Adrenal gland (tissue), 19 donors: ENCODE measurements at regions of chr6 and their contacts with region 1.

Region 1: GRCh38 chr6:79777713-79778579 is 146.8 kb downstream of the SH3BGRL2 start:
- DNase-seq: peak; percentile 65 to 82 (median 79)
- H3K4me3 ChIP-seq: peak overlapping the region in 1 of 4 donors; percentile 36
- H3K27ac ChIP-seq: no peak overlapping the region
- H3K4me1 ChIP-seq: no peaks in the 10 kb centered on the region
- H3K27me3 ChIP-seq: no peaks in the 10 kb centered on the region
- CTCF ChIP-seq: peak; percentile 85 to 98 (median 90)
- POLR2A ChIP-seq: no peak

Region 2: GRCh38 chr6:79525272-79526100 is 252.5 kb before region 1 on chr6:
- intact Hi-C with region 1: no loop called
- DNase-seq: peak in 3 of 7 donors; percentile 17 to 76 (median 25)
- H3K4me3 ChIP-seq: no peak overlapping the region
- H3K27ac ChIP-seq: peak overlapping the region in 1 of 5 donors; percentile 7
- H3K4me1 ChIP-seq: no peaks in the 10 kb centered on the region
- H3K27me3 ChIP-seq: no peaks in the 10 kb centered on the region
- CTCF ChIP-seq: no peak
- POLR2A ChIP-seq: no peak

Region 3: DNA sequence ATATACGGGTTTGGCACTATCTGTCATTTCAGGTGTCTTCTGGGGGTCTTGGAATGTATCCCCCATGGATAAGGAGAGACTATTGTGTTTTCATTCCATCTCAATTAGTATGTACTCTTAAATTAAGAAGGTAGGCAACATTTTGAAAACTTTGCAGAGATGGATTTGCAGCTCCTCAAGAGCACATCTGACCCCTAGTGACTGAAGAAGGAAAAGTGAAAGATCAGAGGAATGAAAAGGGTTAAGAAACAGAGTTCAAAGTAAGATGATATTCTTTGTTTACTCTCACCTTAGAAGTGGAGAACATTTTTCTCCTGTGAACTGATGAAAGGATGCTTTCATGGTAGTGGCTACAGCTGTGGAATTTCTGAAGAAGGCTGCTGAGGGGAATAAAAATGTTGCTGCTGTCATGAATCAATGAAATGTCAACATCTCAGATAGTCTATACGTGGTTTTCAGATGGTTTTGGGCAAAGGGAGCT is 105.3 kb before region 1 on chr6:
- intact Hi-C with region 1: no loop called
- DNase-seq: no peak
- H3K4me3 ChIP-seq: no peak overlapping the region
- H3K27ac ChIP-seq: no peak overlapping the region
- H3K4me1 ChIP-seq: no peaks in the 10 kb centered on the region
- H3K27me3 ChIP-seq: no peaks in the 10 kb centered on the region
- CTCF ChIP-seq: peak in 4 of 6 experiments; percentile 25 to 40 (median 30)
- POLR2A ChIP-seq: no peak

Region 4: GRCh38 chr6:79813854-79814709 is 36.1 kb after region 1 on chr6:
- intact Hi-C with region 1: loop called in 1 of 2 experiments (anchors 5 kb)
- DNase-seq: peak; percentile 66 to 91 (median 75)
- H3K4me3 ChIP-seq: no peak overlapping the region
- H3K27ac ChIP-seq: no peak overlapping the region
- H3K4me1 ChIP-seq: no peaks in the 10 kb centered on the region
- H3K27me3 ChIP-seq: no peaks in the 10 kb centered on the region
- CTCF ChIP-seq: peak; percentile 69 to 89 (median 78)
- POLR2A ChIP-seq: no peak

Region 5: GRCh38 chr6:79869600-79870084 is 91.7 kb after region 1 on chr6:
- intact Hi-C with region 1: loop called in 1 of 2 experiments (anchors 5 kb)
- DNase-seq: peak; percentile 64 to 86 (median 79)
- H3K4me3 ChIP-seq: peak overlapping the region in 1 of 4 donors; percentile 34
- H3K27ac ChIP-seq: no peak overlapping the region
- H3K4me1 ChIP-seq: no peaks in the 10 kb centered on the region
- H3K27me3 ChIP-seq: no peaks in the 10 kb centered on the region
- CTCF ChIP-seq: peak; percentile 64 to 92 (median 79)
- POLR2A ChIP-seq: no peak